ENCODE measurements at regions of chr7 and their contacts with region 1.

Region 1: DNA sequence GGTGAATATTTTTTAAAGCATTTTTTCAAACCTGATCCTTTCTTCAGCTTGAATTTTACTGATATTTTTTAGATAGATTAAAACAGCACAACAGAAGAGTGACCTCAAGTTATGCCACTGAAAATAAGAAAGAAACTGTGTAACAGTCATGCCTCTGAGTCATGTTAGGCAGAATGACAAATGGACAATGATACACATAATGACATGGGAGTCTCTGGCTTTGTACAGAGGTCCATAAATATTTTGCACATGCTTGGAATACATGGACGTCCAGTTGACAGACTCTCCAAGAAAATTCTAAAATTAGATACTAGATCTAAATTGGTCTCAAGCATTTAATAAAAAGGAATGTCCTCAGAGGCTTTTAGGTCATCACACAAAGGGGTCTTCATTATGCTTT is 21.9 kb upstream of the SEMA3A start:
- DNase-seq: no peak
- ATAC-seq: no peak
- H3K4me3 ChIP-seq: no peak overlapping the region
- H3K4me3 Mint-ChIP-seq: no peak overlapping the region
- H3K27ac ChIP-seq: no peak overlapping the region
- H3K27ac Mint-ChIP-seq: no peak overlapping the region
- H3K4me1 ChIP-seq: no peaks in the 10 kb centered on the region
- H3K4me1 Mint-ChIP-seq: peaks cover 0 to 3% (median 0%) of the 10 kb centered on the region in 3 donors
- H3K27me3 ChIP-seq: no peaks in the 10 kb centered on the region
- H3K27me3 Mint-ChIP-seq: peaks cover 0 to 4% of the 10 kb centered on the region in 2 donors

Region 2: DNA sequence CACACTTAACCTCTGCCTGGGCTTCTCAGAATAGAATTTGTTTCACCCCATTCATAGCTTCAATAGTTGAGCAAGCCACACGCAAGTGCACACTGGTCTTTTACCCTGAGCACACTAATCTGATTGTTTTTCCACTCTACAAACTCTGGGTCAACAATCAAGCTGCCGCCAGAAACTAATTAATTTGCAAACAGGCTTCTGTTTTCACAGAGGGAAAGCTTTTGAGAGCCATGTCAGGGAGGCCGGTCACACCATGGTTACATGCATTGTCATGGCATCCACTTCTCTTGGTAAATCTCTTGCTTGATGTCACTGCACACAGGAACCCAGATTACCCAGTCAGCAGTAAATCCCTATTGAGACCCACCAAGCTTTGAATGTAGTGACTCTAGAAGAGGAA is 176.1 kb before region 1 on chr7:
- CTCF ChIA-PET with region 1: no interaction called
- POLR2A ChIA-PET with region 1: interaction called in 1 of 2 experiments, 12 read pairs
- DNase-seq: no peak
- ATAC-seq: no peak
- H3K4me3 ChIP-seq: no peak overlapping the region
- H3K4me3 Mint-ChIP-seq: no peak overlapping the region
- H3K27ac ChIP-seq: no peak overlapping the region
- H3K27ac Mint-ChIP-seq: no peak overlapping the region
- H3K4me1 ChIP-seq: no peaks in the 10 kb centered on the region
- H3K4me1 Mint-ChIP-seq: no peaks in the 10 kb centered on the region
- H3K27me3 ChIP-seq: no peaks in the 10 kb centered on the region
- H3K27me3 Mint-ChIP-seq: no peaks in the 10 kb centered on the region

Region 3: DNA sequence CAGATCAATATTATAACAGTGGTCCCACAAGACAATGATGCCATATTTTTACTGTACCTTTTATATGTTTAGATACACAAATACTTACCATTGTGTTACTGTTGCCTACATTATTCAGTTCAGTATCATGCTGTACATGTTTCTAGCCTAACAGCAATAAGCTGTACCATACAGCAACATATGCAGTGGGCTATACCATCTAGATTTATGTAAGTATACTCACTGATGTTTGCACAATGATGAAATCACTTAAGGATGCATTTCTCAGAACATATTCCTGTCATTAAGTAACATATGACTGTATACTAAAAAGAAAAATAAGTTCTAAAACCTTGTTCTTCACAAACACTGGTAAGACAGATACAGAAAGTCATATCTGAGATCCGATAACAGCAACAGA is 446.8 kb after region 1 on chr7:
- CTCF ChIA-PET with region 1: no interaction called
- POLR2A ChIA-PET with region 1: no interaction called
- DNase-seq: no peak
- ATAC-seq: no peak
- H3K4me3 ChIP-seq: no peak overlapping the region
- H3K4me3 Mint-ChIP-seq: no peak overlapping the region
- H3K27ac ChIP-seq: no peak overlapping the region
- H3K27ac Mint-ChIP-seq: no peak overlapping the region
- H3K4me1 ChIP-seq: no peaks in the 10 kb centered on the region
- H3K4me1 Mint-ChIP-seq: no peaks in the 10 kb centered on the region
- H3K27me3 ChIP-seq: no peaks in the 10 kb centered on the region
- H3K27me3 Mint-ChIP-seq: no peaks in the 10 kb centered on the region

Measured in T-cell (primary cell).